ENCODE measurements at regions of chr2 and their contacts with region 1.

Region 1: GRCh38 chr2:98944775-98945174 is 8.8 kb upstream of the CRACDL start:
- DNase-seq: no peak
- ATAC-seq: no peak
- H3K4me3 ChIP-seq: no peak overlapping the region
- H3K4me3 Mint-ChIP-seq: no peak overlapping the region
- H3K27ac ChIP-seq: no peak overlapping the region
- H3K27ac Mint-ChIP-seq: no peak overlapping the region
- H3K4me1 ChIP-seq: no peaks in the 10 kb centered on the region
- H3K4me1 Mint-ChIP-seq: no peaks in the 10 kb centered on the region
- H3K27me3 ChIP-seq: peaks cover 0 to 11% of the 10 kb centered on the region in 2 experiments
- H3K27me3 Mint-ChIP-seq: peaks cover 26 to 33% of the 10 kb centered on the region in 2 donors

Region 2: GRCh38 chr2:99311451-99311850 is 366.7 kb after region 1 on chr2:
- CTCF ChIA-PET with region 1: no interaction called
- POLR2A ChIA-PET with region 1: interaction called in 1 of 2 experiments, 11 read pairs
- DNase-seq: no peak
- ATAC-seq: no peak
- H3K4me3 ChIP-seq: no peak overlapping the region
- H3K4me3 Mint-ChIP-seq: no peak overlapping the region
- H3K27ac ChIP-seq: no peak overlapping the region
- H3K27ac Mint-ChIP-seq: no peak overlapping the region
- H3K4me1 ChIP-seq: no peaks in the 10 kb centered on the region
- H3K4me1 Mint-ChIP-seq: no peaks in the 10 kb centered on the region
- H3K27me3 ChIP-seq: no peaks in the 10 kb centered on the region
- H3K27me3 Mint-ChIP-seq: no peaks in the 10 kb centered on the region

Measured in T-cell (primary cell).